ENCODE measurements at regions of chr21 and their contacts with region 1.

Region 1: DNA sequence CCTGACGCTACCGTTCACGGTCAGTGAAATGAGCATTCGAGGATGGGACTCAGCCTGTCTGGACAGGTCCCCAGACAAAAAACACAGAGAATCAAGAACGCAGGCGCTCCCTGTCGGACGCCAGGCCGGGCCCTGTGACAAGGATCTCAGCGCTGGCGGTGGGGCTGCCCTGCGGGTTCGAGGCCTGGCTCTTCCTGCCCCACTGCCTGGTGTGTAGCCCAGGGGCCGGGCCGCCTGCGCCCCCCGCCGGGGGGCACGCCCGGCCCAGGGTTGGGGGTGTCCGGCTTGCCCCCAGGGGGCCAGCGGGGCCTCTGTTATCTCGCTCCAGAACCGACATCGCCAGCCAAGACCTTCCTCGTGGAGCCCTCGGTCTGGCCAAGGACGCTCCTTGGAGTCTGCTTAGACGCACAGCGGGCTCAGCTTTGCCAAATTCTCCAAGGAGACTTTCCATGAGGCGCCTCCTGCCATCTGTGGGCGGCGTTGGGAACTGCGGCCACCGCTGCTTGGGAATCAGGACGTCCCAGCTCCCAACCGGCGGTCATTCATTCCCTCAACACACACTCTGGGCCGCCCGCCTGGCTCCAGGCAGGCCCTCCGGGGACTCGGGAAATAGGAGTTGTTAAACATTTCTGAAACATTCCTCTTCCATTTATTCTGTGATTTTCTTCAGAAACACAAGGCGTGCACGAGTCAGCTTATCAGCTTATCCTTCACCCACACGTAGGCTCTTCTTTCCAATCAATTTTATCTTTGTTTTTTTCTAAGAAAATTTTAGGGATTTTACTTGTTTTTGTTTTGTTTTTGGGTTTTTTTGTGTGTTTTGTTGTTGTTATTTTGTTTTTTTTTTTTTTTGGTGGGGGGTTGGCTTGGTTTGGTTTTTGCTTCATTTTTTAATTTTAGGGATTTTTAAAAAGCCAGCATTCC is 11.4 kb upstream of the RIPK4 start:
- DNase-seq: peak; percentile 84 to 95 (median 92)
- H3K4me3 ChIP-seq: no peak overlapping the region
- H3K27ac ChIP-seq: no peak overlapping the region
- H3K4me1 ChIP-seq: peaks cover 0 to 6% of the 10 kb centered on the region in 2 donors
- H3K27me3 ChIP-seq: peaks cover 54% of the 10 kb centered on the region
- CTCF ChIP-seq: peak; percentile 81 to 97 (median 86)
- POLR2A ChIP-seq: no peak

Region 2: DNA sequence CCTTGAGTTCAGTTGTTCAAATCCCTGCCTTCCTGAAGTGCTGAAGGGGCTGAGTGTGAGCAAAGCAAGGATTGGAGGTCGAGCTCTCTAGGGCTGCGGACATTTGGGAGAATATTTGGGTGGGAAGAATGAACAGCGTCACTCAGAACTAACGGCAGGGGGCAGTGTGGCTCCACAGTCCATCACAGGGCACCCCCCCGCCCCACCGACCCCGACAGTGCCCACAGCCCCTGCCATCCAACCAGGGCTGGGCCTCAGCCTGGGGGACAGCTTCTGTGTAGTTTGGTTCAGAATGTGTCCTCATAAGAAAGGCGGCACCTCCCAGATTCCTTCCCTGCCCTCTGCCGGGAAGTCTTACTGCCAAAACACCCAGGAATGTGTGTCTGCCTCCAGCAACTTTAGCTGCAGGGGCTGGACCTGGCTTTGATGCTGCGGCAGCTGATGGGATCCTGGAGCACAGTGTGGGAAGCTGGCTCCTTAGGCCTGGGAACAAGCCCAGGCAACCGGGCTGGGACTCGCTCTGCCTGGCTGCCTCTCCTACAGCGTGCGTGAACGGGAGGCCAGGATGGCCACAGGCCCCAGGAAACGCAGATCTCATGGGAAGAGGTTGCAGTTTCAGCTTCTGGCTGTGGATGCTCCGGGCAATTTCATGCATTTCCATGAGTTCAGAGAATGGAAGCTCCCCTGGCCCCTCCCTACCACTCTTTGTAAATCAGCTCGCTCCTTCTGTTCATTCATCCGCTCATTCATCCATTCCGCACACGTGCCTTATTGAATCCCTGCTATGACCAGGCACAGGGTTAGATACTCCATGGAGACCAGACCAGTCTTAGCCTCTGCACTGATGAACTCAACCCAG is 165.3 kb before region 1 on chr21:
- intact Hi-C with region 1: loop called (anchors 5 kb)
- DNase-seq: peak; percentile 30 to 64 (median 40)
- H3K4me3 ChIP-seq: no peak overlapping the region
- H3K27ac ChIP-seq: peak overlapping the region in 1 of 5 donors; percentile 54
- H3K4me1 ChIP-seq: no peaks in the 10 kb centered on the region
- H3K27me3 ChIP-seq: peaks cover 5% of the 10 kb centered on the region
- CTCF ChIP-seq: peak; percentile 32 to 70 (median 46)
- POLR2A ChIP-seq: no peak

Measured in adrenal gland (tissue), 19 donors.